Left cardiac atrium (tissue), 4 donors: ENCODE measurements at regions of chr20 and their contacts with region 1.

Region 1: DNA sequence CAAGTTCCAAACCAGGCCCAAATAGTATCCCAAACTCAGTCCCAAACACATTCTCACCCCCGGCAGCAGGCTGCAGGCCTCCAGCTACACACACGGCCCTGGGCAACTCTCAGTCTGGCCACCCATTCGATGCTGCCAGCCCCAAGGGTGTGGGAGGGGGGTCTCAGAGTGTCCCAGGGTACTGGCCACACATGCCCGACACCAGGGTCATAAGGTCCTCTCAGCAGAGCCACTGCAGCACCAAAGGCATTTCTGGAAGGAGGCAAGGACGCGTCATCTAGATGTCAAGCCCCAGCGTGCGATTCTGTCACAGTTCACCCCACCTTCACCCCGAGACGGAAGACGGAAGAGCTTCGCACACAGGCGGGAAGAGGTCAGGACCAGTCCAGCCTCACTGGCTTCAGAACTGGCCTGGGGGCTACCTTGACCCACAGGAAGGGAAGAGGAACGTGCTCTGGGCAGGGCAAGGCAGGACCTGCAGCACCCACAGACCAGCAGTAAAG is 9.5 kb downstream of the MYL9 start:
- DNase-seq: no peak
- ATAC-seq: peak; percentile 45 to 50

Region 2: DNA sequence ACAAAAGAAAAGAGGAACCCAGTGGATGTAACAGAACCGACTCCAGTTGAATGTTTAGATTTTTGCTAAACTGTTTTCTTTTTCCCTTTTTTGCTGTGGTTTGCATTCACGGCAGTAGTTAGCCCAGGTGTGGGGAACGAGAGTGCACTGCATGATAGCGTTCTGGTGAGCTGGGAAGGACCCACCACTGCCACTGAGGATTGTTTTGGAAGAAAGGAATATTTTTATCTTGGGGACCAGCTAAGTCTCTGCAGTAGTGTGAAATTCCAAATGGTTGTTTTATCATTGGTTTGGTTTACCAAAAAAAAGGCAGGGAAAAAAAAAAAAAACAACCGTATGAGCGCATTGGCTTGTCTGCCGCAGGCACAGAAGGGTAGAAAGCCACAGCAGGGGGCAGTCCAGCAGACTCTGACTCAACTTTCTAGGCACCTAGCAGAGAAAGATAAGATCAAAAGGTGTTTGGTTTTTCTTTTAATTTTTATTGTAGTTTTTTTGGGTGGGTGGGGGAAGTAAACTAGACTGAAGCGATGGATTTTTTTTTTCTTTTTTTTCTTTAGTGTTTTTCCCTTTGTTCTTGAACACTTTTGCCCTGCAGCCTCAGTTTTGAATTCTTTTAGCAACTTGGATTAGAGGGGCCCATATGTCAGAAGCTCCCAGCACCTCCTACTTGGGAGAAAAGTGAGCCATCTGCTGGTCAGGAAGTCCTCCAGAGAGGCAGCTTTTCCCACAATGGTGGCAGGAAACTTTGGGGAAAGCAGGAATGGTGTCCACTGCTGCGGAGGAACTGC is 41.2 kb after region 1 on chr20:
- intact Hi-C with region 1: loop called (anchors 2 to 5 kb)
- DNase-seq: no peak
- ATAC-seq: no peak

Region 3: GRCh38 chr20:36624068-36624943 is 73.5 kb after region 1 on chr20:
- intact Hi-C with region 1: no loop called
- DNase-seq: peak; percentile 30
- ATAC-seq: peak; percentile 68 to 80

Region 4: GRCh38 chr20:36773597-36774390 is 222.9 kb after region 1 on chr20 and contains the start of gene DSN1:
- intact Hi-C with region 1: loop called in 1 of 2 experiments (anchors 10 kb)
- DNase-seq: peak; percentile 97
- ATAC-seq: peak; percentile 96 to 98
- total RNA-seq, gene DSN1: 5.0 to 6.7 TPM